Right ventricle myocardium superior (tissue), 1 donor: ENCODE measurements at regions of chr5 and their contacts with region 1.

Region 1: DNA sequence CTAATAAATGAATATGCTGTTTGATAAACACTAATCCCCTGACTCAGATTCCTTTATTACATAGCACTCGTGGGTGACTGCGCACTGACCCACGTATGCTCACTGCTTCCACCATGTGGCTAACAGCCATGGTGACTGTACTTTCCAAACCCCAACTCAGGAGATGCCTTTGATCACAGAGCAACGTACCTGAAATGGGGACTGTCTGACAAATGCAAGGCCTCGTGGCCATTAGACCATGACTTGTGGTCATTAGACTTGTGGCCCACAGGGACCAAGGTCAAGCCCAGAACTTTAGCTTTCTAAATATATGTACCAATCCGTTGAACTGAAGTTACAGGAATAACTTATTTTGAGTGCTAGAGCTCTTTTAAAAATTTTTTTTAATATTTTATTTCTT is 46.6 kb downstream of the CYFIP2 start:
- DNase-seq: no peak
- ATAC-seq: peak; percentile 71

Region 2: GRCh38 chr5:157159209-157159751 is 153.2 kb before region 1 on chr5:
- intact Hi-C with region 1: loop called (anchors 10 kb)
- DNase-seq: no peak
- ATAC-seq: no peak

Region 3: DNA sequence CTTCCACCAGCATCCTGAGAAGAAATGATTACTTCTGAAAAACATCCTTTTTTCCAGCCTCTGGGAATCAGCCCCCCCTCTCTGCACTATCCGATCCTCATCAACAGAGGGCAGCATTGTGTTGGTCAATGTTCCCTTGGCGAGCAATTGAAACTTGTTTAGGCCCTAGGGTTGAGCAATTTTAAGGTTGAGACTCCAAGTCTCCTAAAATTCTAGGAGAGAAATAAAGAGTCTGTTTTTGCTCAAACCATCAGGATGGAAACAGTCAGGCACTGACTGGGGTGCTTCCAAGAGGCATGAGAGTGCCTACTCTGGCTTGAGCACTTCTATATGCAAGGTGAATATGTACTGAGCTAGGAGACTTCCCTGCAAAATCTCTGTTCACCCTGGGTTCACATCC is 58.9 kb before region 1 on chr5:
- intact Hi-C with region 1: loop called (anchors 5 kb)
- DNase-seq: no peak
- ATAC-seq: peak; percentile 95